ENCODE measurements at regions of chr13 and their contacts with region 1.

Region 1: DNA sequence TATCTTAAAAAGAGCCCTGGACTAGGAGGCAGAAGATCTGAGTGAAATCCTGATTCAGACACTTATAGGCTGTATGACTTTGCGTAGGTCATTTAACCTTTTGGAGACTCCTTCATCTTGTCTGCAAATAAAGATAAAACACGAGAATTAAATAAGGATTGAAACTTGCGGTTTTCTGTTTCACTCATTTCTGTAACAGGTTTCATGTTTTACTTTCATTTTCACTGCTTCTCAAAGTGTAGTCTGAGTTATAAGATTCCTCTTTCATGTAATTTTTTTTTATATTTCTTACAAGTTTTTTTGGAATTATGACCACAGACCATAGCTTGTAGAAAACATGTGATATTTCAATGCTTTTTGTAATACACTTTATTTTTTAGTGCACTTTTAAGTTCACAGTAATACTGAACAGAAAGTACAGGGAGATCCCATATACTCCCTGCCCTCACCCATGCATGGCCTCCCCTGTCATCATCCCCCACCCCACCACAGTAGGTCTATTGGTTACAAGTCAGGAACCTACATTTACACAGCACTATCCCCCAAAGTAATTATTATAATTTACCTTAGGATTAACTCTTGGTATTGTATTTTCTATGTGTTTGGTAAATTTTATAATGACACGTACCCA is 174.6 kb downstream of the ITGBL1 start:
- DNase-seq: peak; percentile 58
- H3K4me3 Mint-ChIP-seq: peak overlapping the region; percentile 3
- H3K27ac Mint-ChIP-seq: no peak overlapping the region
- H3K4me1 Mint-ChIP-seq: peaks cover 43% of the 10 kb centered on the region
- H3K27me3 Mint-ChIP-seq: peaks cover 14% of the 10 kb centered on the region

Region 2: DNA sequence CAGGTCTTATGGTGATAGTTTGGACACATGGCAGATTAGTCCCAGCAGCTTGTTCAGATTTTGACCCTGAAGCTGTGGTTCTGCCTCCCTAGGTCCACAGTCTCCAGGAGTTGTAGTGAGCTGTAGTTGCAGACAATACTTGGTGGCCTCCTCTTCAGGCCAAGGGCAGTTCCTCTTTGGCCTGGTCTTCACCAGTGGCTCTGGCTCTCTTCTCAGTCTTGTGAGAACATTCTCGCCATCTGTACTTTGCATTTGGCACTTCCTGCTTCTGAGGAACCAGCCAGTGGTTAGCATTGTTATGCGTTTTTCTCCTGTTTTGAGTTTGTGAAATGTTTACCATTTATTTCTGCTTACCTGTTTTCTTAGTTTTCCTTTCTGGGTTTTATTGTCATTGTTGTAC is 1497.4 kb before region 1 on chr13:
- CTCF ChIA-PET with region 1: no interaction called
- intact Hi-C with region 1: loop called (anchors 5 kb)
- DNase-seq: no peak
- H3K4me3 Mint-ChIP-seq: no peak overlapping the region
- H3K27ac Mint-ChIP-seq: no peak overlapping the region
- H3K4me1 Mint-ChIP-seq: peaks cover 23% of the 10 kb centered on the region
- H3K27me3 Mint-ChIP-seq: no peaks in the 10 kb centered on the region

Region 3: GRCh38 chr13:100392709-100393641 is 1234.1 kb before region 1 on chr13:
- CTCF ChIA-PET with region 1: no interaction called
- intact Hi-C with region 1: loop called (anchors 5 kb)
- DNase-seq: peak; percentile 88
- H3K4me3 Mint-ChIP-seq: no peak overlapping the region
- H3K27ac Mint-ChIP-seq: no peak overlapping the region
- H3K4me1 Mint-ChIP-seq: peaks cover 24% of the 10 kb centered on the region
- H3K27me3 Mint-ChIP-seq: no peaks in the 10 kb centered on the region

Region 4: GRCh38 chr13:101520672-101521071 is 106.4 kb before region 1 on chr13:
- CTCF ChIA-PET with region 1: no interaction called
- intact Hi-C with region 1: loop called (anchors 2 kb)
- DNase-seq: peak; percentile 37
- H3K4me3 Mint-ChIP-seq: no peak overlapping the region
- H3K27ac Mint-ChIP-seq: no peak overlapping the region
- H3K4me1 Mint-ChIP-seq: peaks cover 17% of the 10 kb centered on the region
- H3K27me3 Mint-ChIP-seq: no peaks in the 10 kb centered on the region

Region 5: DNA sequence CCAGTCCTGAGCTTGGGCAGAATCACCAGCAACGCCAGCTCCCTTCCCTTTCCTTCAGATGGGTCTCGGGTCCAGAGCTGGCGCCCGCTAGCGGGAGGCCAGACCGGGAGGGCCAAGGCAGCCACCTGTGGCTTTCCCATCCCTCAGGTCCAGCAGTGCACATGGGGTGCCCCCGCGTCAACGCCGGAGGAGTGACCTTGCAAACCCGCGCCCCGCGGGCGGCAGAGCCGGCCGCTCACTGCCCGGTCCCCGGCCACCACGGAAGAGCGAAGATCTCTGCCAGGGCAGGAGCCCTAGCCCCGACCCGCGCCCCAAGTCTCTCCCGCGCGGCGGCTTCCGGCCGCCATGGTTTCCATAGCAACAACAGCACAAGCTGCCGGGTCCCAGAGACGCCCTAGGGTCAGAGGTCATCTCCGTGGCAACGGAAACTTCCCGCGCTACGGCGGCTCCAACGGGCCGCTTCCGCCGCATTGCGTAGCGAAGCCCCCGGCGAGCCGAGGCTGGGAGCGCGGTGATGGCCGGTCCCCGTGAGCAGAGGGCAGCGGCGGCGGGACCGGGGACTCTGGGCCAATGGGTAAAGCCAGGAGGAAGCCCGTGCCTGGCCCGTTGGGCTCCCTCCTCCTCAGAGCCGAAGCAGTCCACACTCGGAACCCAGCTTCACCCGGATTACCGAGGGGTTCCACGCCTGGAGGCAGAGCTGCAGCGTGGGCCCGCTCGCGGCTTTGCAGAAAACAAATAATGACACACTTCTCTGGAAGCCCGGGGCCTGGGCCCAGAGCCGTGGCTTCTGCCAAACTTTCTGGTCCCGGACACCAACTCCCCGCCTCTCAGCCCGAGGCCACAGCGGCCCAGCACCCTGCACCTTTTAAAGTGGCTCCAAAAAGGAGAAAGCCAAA is 767.4 kb after region 1 on chr13:
- CTCF ChIA-PET with region 1: no interaction called
- intact Hi-C with region 1: loop called (anchors 2 kb)
- DNase-seq: peak; percentile 97
- H3K4me3 Mint-ChIP-seq: peak overlapping the region; percentile 79
- H3K27ac Mint-ChIP-seq: peak overlapping the region; percentile 69
- H3K4me1 Mint-ChIP-seq: peaks cover 17% of the 10 kb centered on the region
- H3K27me3 Mint-ChIP-seq: peaks cover 16% of the 10 kb centered on the region

Region 6: GRCh38 chr13:102773441-102774215 is 1146.6 kb after region 1 on chr13 and contains the start of gene TEX30:
- CTCF ChIA-PET with region 1: no interaction called
- intact Hi-C with region 1: loop called (anchors 10 kb)
- DNase-seq: peak; percentile 83
- H3K4me3 Mint-ChIP-seq: peak within 1 kb of the TSS; percentile 82
- H3K27ac Mint-ChIP-seq: peak within 1 kb of the TSS; percentile 87
- H3K4me1 Mint-ChIP-seq: peaks cover 34% of the 10 kb centered on the region
- H3K27me3 Mint-ChIP-seq: no peaks in the 10 kb centered on the region
- total RNA-seq, gene TEX30: 20.8 to 23.0 TPM

Region 7: GRCh38 chr13:102845630-102846260 is 1218.7 kb after region 1 on chr13 and contains the start of gene ERCC5:
- CTCF ChIA-PET with region 1: no interaction called
- intact Hi-C with region 1: loop called (anchors 5 kb)
- DNase-seq: peak; percentile 96
- H3K4me3 Mint-ChIP-seq: peak within 1 kb of the TSS; percentile 92
- H3K27ac Mint-ChIP-seq: peak within 1 kb of the TSS; percentile 96
- H3K4me1 Mint-ChIP-seq: peaks cover 35% of the 10 kb centered on the region
- H3K27me3 Mint-ChIP-seq: no peaks in the 10 kb centered on the region
- total RNA-seq, gene ERCC5: 52.0 to 54.0 TPM

Measured in activated naive CD4-positive, alpha-beta T cell treated with anti-CD3 and anti-CD28 coated beads for 36 hours (primary cell).